Activated naive CD4-positive, alpha-beta T cell treated with anti-CD3 and anti-CD28 coated beads for 36 hours (primary cell): ENCODE measurements at regions of chr10 and their contacts with region 1.

Region 1: GRCh38 chr10:119872860-119873681 is 428 bp upstream of the MCMBP start:
- DNase-seq: peak; percentile 84
- H3K4me3 Mint-ChIP-seq: peak overlapping the region; percentile 83
- H3K27ac Mint-ChIP-seq: peak overlapping the region; percentile 84
- H3K4me1 Mint-ChIP-seq: peaks cover 38% of the 10 kb centered on the region
- H3K27me3 Mint-ChIP-seq: no peaks in the 10 kb centered on the region

Region 2: GRCh38 chr10:119892188-119893065 is 19.4 kb after region 1 on chr10 and contains the start of gene SEC23IP:
- CTCF ChIA-PET with region 1: interaction called, 5 read pairs
- intact Hi-C with region 1: loop called (anchors 1 kb)
- DNase-seq: peak; percentile 95
- H3K4me3 Mint-ChIP-seq: peak within 1 kb of the TSS; percentile 95
- H3K27ac Mint-ChIP-seq: peak within 1 kb of the TSS; percentile 92
- H3K4me1 Mint-ChIP-seq: peaks cover 49% of the 10 kb centered on the region
- H3K27me3 Mint-ChIP-seq: no peaks in the 10 kb centered on the region
- total RNA-seq, gene SEC23IP: 49.0 to 55.2 TPM

Region 3: GRCh38 chr10:119919826-119920225 is 46.8 kb after region 1 on chr10:
- CTCF ChIA-PET with region 1: no interaction called
- intact Hi-C with region 1: loop called (anchors 2 kb)
- DNase-seq: no peak
- H3K4me3 Mint-ChIP-seq: no peak overlapping the region
- H3K27ac Mint-ChIP-seq: peak overlapping the region; percentile 42
- H3K4me1 Mint-ChIP-seq: peaks cover 13% of the 10 kb centered on the region
- H3K27me3 Mint-ChIP-seq: no peaks in the 10 kb centered on the region